Ascending aorta (tissue), 2 donors: ENCODE measurements at regions of chr14 and their contacts with region 1.

Region 1: GRCh38 chr14:77616454-77617229 is at the start of gene SPTLC2:
- DNase-seq: peak; percentile 98 to 100
- H3K4me3 ChIP-seq: peak within 1 kb of the TSS; percentile 84 to 91
- H3K27ac ChIP-seq: peak within 1 kb of the TSS; percentile 71 to 76
- H3K4me1 ChIP-seq: peaks cover 5 to 6% of the 10 kb centered on the region in 2 donors
- H3K27me3 ChIP-seq: no peaks in the 10 kb centered on the region
- CTCF ChIP-seq: no peak
- total RNA-seq, gene SPTLC2: 25.7 TPM

Region 2: GRCh38 chr14:77485901-77486678 is 130.6 kb before region 1 on chr14:
- intact Hi-C with region 1: no loop called
- DNase-seq: no peak
- H3K4me3 ChIP-seq: no peak overlapping the region
- H3K27ac ChIP-seq: no peak overlapping the region
- H3K4me1 ChIP-seq: no peaks in the 10 kb centered on the region
- H3K27me3 ChIP-seq: no peaks in the 10 kb centered on the region
- CTCF ChIP-seq: no peak

Region 3: DNA sequence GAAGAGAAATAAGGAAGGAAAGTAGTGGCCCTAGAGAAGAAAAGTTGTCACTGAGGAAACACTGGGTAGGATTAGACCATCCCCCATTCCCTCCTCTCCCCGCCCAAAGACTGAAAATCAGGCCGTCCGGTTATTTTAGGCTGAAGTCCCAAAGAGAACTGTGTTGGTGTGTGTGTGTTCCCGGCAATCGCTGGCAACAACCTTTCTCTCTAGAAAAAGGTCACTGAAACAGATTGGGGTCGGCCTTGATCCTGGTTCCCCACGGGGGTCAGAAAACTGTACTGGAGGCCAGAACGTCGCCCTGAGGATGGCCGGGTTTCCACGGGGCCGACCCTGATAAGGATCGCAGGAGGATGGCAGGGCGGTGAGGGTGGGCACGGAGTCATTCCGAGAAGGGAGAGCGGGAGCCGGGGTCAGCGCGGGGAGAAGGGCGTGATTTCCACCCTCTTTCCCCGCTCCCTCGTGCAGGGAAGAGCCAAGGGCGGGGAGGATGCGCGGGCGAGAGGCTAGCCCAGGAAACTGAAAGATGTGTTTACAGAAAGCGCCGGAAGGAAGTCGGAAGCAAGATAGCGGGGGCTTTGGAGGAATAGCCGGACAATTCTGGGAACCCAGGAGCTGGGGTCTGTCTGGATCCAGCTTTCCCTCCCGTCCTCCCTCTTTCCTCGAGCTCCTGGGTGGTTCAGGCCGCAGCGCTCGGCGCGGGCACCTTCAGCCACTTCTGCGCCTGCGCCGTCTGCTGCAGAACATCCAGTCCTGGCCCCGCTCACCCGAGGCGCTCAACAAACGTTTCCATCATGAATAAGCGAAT is 25.1 kb after region 1 on chr14:
- intact Hi-C with region 1: loop called (anchors 1 kb)
- DNase-seq: peak in 1 of 2 donors; percentile 88
- H3K4me3 ChIP-seq: peak overlapping the region; percentile 48 to 73
- H3K27ac ChIP-seq: peak overlapping the region; percentile 78 to 85
- H3K4me1 ChIP-seq: no peaks in the 10 kb centered on the region
- H3K27me3 ChIP-seq: no peaks in the 10 kb centered on the region
- CTCF ChIP-seq: no peak

Region 4: DNA sequence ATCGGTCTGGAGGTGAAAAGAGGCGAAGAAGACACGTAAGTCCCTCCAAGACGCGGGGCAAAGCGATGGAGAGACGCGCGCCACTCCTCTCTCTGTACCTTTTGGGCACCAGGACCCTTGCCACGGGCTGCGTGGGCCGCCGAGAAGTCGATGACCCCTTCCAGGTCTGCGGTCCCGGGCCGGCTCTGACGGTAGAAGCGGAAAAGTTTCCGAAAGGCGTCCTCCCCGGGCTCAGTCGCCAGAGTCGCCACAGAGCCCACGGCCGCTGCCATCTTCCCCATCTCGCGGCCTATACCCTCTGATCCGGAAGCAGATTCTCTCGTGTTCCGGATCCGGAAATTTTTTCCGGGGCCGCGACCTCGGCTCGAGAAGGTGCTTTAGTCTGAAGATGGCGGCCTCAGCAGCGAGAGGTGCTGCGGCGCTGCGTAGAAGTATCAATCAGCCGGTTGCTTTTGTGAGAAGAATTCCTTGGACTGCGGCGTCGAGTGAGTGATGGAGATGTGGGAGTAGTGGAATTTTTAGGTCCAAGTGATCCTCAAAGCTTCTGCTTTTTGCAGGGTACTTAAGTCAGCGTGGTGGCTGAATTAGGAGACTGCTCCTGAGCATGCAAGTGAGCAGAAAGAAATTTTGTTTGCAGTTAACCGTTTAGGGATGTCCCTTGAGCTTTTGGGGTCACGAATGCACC is 91.2 kb after region 1 on chr14 and contains the starts of genes ALKBH1 and SLIRP:
- intact Hi-C with region 1: loop called (anchors 1 kb)
- DNase-seq: peak; percentile 52 to 93
- H3K4me3 ChIP-seq: peak within 1 kb of the TSS; percentile 66 to 88
- H3K27ac ChIP-seq: peak within 1 kb of the TSS; percentile 13 to 45
- H3K4me1 ChIP-seq: peaks cover 12 to 20% of the 10 kb centered on the region in 2 donors
- H3K27me3 ChIP-seq: no peaks in the 10 kb centered on the region
- CTCF ChIP-seq: no peak
- total RNA-seq, gene ALKBH1: 14.5 TPM
- total RNA-seq, gene SLIRP: 3.1 TPM

Region 5: DNA sequence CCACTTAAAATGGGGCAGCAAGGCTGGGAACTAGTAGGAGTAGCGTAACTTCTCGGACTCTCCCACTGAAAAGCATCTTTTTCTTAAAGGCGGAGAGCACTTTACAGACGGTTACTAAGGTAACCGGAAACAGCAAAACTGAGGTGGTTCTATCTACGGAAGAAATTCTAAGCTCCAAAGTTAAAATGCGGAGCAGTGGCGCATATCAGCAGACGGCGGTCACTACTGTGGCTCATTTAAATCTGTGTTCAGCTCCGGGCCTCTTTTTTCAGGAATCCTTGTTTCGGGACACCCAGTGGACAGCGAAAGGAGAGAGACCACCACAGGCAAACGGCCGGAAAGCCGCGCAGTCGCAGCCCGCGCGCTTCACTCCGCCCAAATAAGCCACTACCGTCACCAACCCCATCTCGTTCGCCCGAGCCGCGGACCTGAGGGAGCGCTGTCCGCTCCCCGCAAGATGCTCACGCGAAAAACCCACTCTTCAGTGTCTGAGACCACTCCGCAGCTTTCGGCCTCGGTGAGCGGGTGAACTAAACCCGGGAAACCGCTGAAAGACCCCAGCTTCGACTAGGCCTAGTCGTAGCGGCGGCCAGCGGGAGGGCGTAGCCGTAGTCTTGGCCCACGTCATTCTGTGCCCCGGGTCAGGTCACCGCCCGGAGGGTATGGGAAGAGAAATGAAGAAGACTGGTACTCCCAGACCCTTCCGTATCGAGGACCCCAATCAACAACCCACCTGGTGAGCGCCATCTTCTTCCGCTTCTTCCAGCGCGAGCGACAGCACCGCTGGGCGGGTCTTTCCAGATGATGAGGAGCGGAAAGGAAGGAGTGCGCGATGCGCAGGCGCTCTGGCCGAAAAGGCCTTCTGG is 144.0 kb after region 1 on chr14 and contains the start of gene SNW1:
- intact Hi-C with region 1: loop called (anchors 2 kb)
- DNase-seq: peak; percentile 84 to 96
- H3K4me3 ChIP-seq: peak within 1 kb of the TSS; percentile 71 to 99
- H3K27ac ChIP-seq: peak within 1 kb of the TSS; percentile 92 to 99
- H3K4me1 ChIP-seq: peaks cover 19% of the 10 kb centered on the region in 2 donors
- H3K27me3 ChIP-seq: no peaks in the 10 kb centered on the region
- CTCF ChIP-seq: no peak
- total RNA-seq, gene SNW1: 16.8 TPM

Region 6: DNA sequence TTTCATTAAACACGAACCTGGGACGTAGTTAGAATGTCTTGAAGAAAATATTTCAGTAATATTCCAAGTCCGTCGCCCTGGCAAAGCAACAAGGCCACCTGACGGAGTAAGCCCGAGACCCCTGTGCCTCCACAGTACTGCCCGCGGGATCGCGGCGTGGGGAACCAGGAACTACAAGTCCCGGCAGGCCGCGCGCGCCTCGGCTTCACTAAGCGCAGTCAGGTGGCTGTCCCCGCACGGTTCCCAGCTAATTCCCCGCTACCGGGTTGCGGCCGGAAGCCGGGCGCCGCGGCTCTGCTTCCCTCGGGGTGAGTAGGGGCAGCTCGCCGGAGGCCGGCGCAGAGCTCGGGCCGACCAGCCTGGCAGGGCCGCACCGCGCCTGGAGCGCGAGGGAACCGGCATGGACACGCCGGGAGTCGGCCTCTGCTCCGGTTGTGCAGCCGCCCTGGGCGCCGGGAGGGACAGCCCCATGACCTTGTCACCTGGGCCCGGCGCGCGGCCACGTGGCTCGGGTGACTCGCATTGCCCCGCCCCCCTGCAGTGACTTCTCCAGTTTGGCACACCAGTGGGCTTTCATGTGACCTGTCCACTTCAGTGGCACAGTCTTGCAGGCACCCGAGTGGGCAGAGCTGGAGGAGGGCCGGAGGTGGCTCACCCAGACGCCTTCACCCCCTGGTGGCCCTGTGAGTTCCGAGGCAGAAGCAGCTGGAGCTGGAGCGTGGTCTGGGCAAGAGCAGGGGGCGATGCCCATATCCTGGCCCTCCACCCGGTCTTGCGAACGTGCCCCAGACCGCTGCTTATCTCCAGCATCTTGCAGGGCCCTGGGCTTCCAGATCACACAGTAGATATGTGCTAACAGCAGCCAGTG is 183.5 kb after region 1 on chr14 and contains the start of gene ADCK1:
- intact Hi-C with region 1: loop called (anchors 2 kb)
- DNase-seq: peak; percentile 74 to 95
- H3K4me3 ChIP-seq: peak within 1 kb of the TSS; percentile 91 to 98
- H3K27ac ChIP-seq: peak within 1 kb of the TSS; percentile 87 to 94
- H3K4me1 ChIP-seq: peaks cover 0 to 3% of the 10 kb centered on the region in 2 donors
- H3K27me3 ChIP-seq: no peaks in the 10 kb centered on the region
- CTCF ChIP-seq: peak; percentile 36 to 52 (median 37)
- total RNA-seq, gene ADCK1: 0.43 TPM